ENCODE measurements at regions of chr9 and their contacts with region 1.

Region 1: GRCh38 chr9:121545875-121546423 is 46.3 kb upstream of the GGTA1 start:
- DNase-seq: peak; percentile 98
- ATAC-seq: peak; percentile 87

Region 2: GRCh38 chr9:121201738-121202533 is 344.0 kb before region 1 on chr9 and contains the start of gene RAB14:
- intact Hi-C with region 1: no loop called
- DNase-seq: peak; percentile 100
- ATAC-seq: peak; percentile 95
- total RNA-seq, gene RAB14: 57.7 TPM

Region 3: DNA sequence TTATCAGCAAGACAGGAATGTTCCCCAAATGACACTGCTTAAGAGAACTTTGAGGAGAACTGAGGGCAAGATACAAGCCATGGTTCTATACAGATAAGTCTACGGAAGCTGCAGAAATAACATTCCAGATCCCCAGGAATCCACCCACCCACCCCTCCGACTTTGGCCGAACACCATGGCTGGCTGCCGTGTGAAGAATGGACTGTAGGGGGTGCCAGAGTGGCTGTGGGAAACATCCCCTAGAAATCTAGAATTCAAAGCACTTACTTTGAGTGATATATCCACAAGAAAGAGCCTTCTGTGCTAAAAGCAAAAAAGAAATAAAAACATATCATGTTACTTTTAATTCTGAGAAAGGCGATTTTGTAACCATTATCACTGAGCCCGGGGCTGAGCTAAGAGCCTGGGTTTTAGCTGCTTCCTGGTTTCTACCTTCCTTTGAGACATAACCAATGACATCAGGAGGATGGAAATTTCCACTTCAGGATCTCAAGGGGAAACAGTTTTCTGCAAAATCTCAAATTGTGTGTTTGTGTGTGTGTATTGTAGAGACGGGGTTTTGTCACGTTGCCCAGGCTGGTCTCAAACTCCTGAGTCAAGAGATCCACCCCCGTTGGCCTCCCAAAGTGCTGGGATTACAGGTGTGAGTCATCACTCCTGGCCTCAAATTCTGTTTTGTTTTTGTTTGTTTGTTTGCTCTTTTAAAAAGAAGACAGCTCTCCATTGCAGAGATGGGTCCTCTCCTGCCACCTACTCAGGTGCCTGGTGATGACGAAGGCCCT is 82.7 kb before region 1 on chr9:
- intact Hi-C with region 1: no loop called
- DNase-seq: peak; percentile 76
- ATAC-seq: peak; percentile 68

Region 4: DNA sequence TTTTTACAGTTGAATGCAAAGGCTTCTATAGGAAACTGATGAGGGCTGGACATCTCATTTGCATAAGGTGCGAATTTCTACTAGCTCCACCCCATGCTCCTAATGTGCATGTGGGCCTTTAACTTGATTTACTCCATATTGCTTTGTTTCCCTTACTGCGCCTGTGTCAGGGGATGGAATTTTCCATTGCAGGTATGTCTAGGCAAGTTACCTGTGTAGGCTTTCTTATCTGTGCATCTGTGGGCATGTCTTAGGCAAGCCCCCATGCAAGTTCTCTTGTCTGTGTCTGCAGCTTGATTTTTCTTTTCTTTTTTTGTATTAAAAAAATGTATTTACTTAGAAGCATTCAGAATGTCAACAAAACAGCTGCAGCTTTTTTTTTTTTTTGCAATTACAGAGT is 26.9 kb before region 1 on chr9:
- intact Hi-C with region 1: no loop called
- DNase-seq: no peak
- ATAC-seq: no peak

Region 5: DNA sequence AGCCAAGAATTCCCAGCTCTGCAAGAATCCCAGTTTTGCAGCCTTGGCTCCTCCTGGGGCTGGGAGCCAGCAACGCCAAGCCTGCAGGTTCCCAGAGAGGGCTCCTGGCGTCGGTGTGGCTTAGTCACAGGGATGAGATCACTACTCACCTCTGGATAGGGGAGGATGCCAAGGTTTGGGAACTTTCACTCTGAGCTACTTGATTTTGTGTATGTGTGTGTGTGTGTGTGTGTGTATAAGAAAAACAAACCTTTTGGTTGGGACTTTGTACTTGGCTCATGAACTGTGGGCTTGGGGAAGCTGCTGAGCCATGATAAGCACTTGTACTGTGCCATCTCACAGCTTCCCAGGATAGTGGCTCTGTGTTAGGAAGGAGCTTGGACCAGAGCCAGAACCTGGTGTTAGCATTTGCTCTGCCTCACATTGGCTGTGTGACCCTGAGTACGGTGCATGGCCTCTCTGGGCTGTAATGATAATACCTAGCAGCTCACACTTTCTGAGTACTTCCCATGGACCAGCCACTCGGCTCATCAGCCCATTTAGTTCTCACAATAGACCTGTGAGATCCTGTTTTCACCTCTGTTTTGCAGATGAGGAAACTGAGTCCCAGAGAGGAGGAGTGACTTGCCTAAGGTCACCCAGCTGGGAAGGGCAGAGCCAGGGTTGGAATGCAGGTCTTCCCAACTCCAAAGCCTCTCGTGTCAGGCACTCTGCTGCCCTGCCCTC is 64.1 kb after region 1 on chr9:
- intact Hi-C with region 1: loop called (anchors 10 kb)
- DNase-seq: peak; percentile 65
- ATAC-seq: peak; percentile 61

Region 6: DNA sequence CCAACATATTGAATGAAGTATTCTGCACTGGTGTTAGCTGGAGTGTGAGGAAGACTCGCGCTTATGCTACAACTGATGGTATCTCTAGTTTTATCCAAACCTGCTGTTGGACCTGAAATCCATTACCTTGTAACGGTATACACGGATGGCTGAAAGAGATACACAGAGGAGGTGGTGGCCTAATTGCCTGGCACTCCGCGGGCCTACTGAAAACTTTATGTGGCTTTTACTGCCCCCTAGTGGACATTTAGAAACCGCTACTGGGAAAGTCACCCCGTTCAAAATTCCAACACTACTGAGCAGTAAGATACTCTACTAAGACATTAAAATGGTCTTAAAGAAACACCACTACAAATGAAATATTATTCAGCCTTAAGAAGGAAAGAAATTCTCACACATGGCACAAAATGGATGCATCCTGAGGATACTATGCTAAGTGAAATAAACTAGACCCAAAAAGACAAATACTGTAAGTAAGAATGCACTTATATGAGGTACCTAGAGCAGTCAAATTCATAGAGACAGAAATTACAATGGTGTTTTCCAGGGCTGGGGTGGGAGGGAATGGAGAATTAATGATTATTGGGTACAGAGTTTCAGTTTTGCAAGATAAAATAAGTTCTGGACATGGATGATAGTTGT is 446.7 kb after region 1 on chr9:
- intact Hi-C with region 1: loop called (anchors 10 kb)
- DNase-seq: peak; percentile 70
- ATAC-seq: peak; percentile 75

Region 7: GRCh38 chr9:122777930-122778671 is 1232.2 kb after region 1 on chr9:
- intact Hi-C with region 1: no loop called
- DNase-seq: no peak
- ATAC-seq: no peak